CD4-positive, alpha-beta T cell (primary cell): ENCODE measurements at regions of chr6 and their contacts with region 1.

Region 1: GRCh38 chr6:14046476-14047068 is 71.0 kb upstream of the CD83 start:
- DNase-seq: peak; percentile 3 to 74 (median 19)
- ATAC-seq: peak; percentile 72
- H3K4me3 ChIP-seq: no peak overlapping the region
- H3K4me3 Mint-ChIP-seq: no peak overlapping the region
- H3K27ac ChIP-seq: no peak overlapping the region
- H3K27ac Mint-ChIP-seq: no peak overlapping the region
- H3K4me1 ChIP-seq: no peaks in the 10 kb centered on the region
- H3K4me1 Mint-ChIP-seq: no peaks in the 10 kb centered on the region
- H3K27me3 ChIP-seq: no peaks in the 10 kb centered on the region
- H3K27me3 Mint-ChIP-seq: peaks cover 34% of the 10 kb centered on the region
- CTCF ChIP-seq: peak; percentile 76

Region 2: GRCh38 chr6:13795041-13795750 is 251.4 kb before region 1 on chr6:
- CTCF ChIA-PET with region 1: interaction called, 4 read pairs
- POLR2A ChIA-PET with region 1: no interaction called
- intact Hi-C with region 1: loop called (anchors 2 to 5 kb)
- DNase-seq: peak; percentile 73 to 92 (median 82)
- ATAC-seq: peak; percentile 98
- H3K4me3 ChIP-seq: no peak overlapping the region
- H3K4me3 Mint-ChIP-seq: no peak overlapping the region
- H3K27ac ChIP-seq: no peak overlapping the region
- H3K27ac Mint-ChIP-seq: no peak overlapping the region
- H3K4me1 ChIP-seq: no peaks in the 10 kb centered on the region
- H3K4me1 Mint-ChIP-seq: no peaks in the 10 kb centered on the region
- H3K27me3 ChIP-seq: no peaks in the 10 kb centered on the region
- H3K27me3 Mint-ChIP-seq: no peaks in the 10 kb centered on the region
- CTCF ChIP-seq: peak; percentile 90

Region 3: DNA sequence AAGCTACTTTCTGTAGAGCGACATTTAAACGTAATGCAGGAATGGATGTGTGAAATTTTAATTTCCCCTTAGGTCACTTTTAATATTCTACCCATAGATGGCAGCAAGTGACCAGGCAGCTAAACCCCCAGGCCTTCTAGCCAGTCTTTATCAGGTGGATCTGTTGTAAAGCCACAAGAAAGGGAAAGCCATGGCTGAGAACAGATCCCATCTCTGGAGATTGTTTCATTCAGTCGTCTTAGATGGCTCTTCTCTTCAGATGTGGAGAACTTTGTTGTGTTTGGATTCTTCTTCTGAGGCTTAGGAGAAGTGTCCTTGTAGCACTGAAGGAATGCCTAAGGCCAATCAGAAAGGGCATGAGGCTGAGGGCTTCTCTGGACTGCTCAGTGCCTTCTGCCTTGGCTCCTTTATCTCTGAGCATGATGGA is 137.6 kb before region 1 on chr6:
- CTCF ChIA-PET with region 1: no interaction called
- POLR2A ChIA-PET with region 1: no interaction called
- intact Hi-C with region 1: loop called (anchors 2 to 10 kb)
- DNase-seq: peak in 13 of 14 experiments; percentile 5 to 82 (median 25)
- ATAC-seq: peak; percentile 59
- H3K4me3 ChIP-seq: no peak overlapping the region
- H3K4me3 Mint-ChIP-seq: no peak overlapping the region
- H3K27ac ChIP-seq: no peak overlapping the region
- H3K27ac Mint-ChIP-seq: no peak overlapping the region
- H3K4me1 ChIP-seq: peaks cover 3% of the 10 kb centered on the region
- H3K4me1 Mint-ChIP-seq: peaks cover 7% of the 10 kb centered on the region
- H3K27me3 ChIP-seq: peaks cover 5 to 13% of the 10 kb centered on the region in 2 experiments
- H3K27me3 Mint-ChIP-seq: peaks cover 50% of the 10 kb centered on the region
- CTCF ChIP-seq: peak; percentile 69

Region 4: DNA sequence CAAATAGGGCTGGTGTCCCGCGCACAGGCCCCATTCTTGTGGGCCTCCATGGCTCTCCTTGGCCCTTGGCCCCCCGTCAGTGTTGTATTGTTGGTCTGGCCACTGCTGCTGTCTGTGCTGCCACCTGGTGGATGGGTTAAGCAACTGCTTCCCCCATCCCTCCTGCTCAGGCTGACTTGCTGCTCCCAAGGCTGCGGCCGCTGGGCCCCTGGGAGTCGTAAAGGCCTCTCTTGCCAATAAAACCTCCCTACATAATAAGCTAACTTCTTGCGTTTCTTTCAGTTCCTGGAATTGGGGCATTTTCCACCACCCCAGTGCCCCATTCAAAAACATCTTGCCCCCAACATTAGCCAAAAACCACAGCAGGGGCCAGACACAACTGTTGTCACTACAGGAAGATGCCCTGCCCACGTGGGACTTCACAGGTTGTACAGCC is 98.1 kb after region 1 on chr6:
- CTCF ChIA-PET with region 1: no interaction called
- POLR2A ChIA-PET with region 1: no interaction called
- intact Hi-C with region 1: loop called in 1 of 2 experiments (anchors 10 kb)
- DNase-seq: peak; percentile 53 to 85 (median 62)
- ATAC-seq: peak; percentile 89
- H3K4me3 ChIP-seq: no peak overlapping the region
- H3K4me3 Mint-ChIP-seq: no peak overlapping the region
- H3K27ac ChIP-seq: no peak overlapping the region
- H3K27ac Mint-ChIP-seq: no peak overlapping the region
- H3K4me1 ChIP-seq: peaks cover 6% of the 10 kb centered on the region
- H3K4me1 Mint-ChIP-seq: no peaks in the 10 kb centered on the region
- H3K27me3 ChIP-seq: no peaks in the 10 kb centered on the region
- H3K27me3 Mint-ChIP-seq: no peaks in the 10 kb centered on the region
- CTCF ChIP-seq: peak; percentile 91